A673 (cell line): ENCODE measurements at regions of chr20 and their contacts with region 1.

Region 1: DNA sequence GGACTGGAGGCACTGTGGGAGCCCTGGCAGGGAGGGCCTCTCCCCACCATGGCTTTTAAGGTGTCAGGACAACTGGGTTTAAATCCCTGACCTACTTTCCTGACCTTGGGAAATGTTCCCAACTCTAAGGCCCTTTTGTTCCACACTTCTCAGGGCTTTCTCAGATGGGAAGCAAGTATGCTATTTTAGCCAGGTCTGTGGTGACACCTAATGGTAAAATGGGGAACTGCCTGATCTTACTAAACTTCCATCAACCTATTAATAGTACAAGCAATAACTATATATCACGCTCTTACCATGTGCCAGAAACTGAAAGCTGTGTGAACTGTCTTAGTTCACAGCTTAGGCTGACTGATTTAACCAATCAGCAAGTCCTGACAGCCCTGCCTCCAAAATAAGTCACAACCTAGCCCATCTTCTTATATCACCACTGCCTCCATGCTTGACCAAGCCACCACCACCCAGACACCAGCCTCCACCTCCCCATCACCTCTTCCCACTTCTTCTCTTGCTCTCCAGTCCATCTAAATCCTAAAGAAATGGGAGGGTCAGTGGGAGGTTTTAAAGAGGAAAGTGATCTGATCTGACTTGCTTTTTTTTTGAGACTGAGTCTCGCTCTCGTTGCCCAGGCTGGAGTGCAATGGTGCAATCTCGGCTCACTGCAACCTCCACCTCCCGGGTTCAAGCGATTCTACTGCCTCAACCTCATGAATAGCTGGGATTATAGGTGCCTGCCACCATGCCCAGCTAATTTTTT is 6.9 kb upstream of the BLCAP start:
- DNase-seq: peak; percentile 85
- H3K4me3 ChIP-seq: no peak overlapping the region
- H3K27ac ChIP-seq: no peak overlapping the region
- H3K4me1 ChIP-seq: no peaks in the 10 kb centered on the region
- H3K27me3 ChIP-seq: no peaks in the 10 kb centered on the region
- CTCF ChIP-seq: peak; percentile 84

Region 2: GRCh38 chr20:37202267-37202943 is 332.2 kb before region 1 on chr20:
- CTCF ChIA-PET with region 1: no interaction called
- POLR2A ChIA-PET with region 1: no interaction called
- intact Hi-C with region 1: loop called (anchors 2 kb)
- DNase-seq: peak; percentile 73
- H3K4me3 ChIP-seq: no peak overlapping the region
- H3K27ac ChIP-seq: no peak overlapping the region
- H3K4me1 ChIP-seq: peaks cover 8% of the 10 kb centered on the region
- H3K27me3 ChIP-seq: no peaks in the 10 kb centered on the region
- CTCF ChIP-seq: peak; percentile 90

Region 3: DNA sequence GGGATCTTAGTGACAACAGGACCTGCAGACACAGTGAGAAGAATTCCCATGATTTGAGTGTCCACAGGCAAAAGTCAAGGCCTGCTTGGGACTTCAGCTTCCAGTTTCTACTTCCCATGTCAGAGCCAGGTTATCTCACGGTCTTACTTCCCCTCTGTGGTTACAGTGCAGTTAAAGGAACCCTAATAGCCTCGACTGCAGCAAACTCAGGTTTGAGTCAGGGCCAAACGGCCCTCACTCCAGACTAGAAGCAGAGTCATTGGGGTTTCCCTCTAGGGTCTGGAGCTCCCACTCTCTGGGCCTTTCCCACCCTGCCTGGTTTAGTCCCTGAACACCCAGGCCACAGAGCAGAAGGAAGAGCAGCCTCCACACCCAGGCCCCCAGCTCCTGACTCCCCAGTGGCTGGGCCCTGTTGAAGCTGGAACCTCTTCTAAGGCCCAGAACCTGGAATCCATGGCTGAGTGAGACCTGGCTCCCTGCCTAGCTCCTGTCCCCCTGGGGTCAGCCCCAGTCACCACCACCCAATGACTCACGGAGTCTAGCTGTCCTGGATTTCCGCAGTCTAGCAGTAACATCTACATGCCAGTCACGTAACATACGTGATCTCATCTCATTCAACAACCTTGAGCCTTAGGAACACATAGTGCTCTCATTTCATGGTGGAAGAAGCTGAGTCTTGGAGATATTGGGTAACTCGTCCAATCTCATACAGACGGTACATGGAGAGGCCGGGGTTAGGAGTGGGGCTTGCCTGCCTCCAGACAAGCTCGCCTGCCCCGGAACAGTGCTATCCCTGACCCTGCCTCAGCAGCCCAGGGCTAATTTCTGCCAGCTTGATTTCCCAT is 263.8 kb before region 1 on chr20:
- CTCF ChIA-PET with region 1: no interaction called
- POLR2A ChIA-PET with region 1: no interaction called
- intact Hi-C with region 1: loop called (anchors 1 kb)
- DNase-seq: no peak
- H3K4me3 ChIP-seq: no peak overlapping the region
- H3K27ac ChIP-seq: no peak overlapping the region
- H3K4me1 ChIP-seq: no peaks in the 10 kb centered on the region
- H3K27me3 ChIP-seq: no peaks in the 10 kb centered on the region
- CTCF ChIP-seq: no peak